Activated T-helper 2 cell treated with anti-CD3 and anti-CD28 coated beads, Interferon-gamma antibody, Interleukin-2, Interleukin-4, amounts not matched to agents 10 μg/mL and 5 μg/mL and 100 μg/mL, durations not matched to agents 14 hours and 24 hours and 36 hours (primary cell): ENCODE measurements at regions of chr7 and their contacts with region 1.

Region 1: GRCh38 chr7:24921362-24921679 is 58.7 kb downstream of the OSBPL3 start:
- DNase-seq: no peak
- H3K4me3 Mint-ChIP-seq: peak overlapping the region; percentile 41
- H3K27ac Mint-ChIP-seq: peak overlapping the region; percentile 91
- H3K4me1 Mint-ChIP-seq: peaks cover 93% of the 10 kb centered on the region
- H3K27me3 Mint-ChIP-seq: no peaks in the 10 kb centered on the region

Region 2: DNA sequence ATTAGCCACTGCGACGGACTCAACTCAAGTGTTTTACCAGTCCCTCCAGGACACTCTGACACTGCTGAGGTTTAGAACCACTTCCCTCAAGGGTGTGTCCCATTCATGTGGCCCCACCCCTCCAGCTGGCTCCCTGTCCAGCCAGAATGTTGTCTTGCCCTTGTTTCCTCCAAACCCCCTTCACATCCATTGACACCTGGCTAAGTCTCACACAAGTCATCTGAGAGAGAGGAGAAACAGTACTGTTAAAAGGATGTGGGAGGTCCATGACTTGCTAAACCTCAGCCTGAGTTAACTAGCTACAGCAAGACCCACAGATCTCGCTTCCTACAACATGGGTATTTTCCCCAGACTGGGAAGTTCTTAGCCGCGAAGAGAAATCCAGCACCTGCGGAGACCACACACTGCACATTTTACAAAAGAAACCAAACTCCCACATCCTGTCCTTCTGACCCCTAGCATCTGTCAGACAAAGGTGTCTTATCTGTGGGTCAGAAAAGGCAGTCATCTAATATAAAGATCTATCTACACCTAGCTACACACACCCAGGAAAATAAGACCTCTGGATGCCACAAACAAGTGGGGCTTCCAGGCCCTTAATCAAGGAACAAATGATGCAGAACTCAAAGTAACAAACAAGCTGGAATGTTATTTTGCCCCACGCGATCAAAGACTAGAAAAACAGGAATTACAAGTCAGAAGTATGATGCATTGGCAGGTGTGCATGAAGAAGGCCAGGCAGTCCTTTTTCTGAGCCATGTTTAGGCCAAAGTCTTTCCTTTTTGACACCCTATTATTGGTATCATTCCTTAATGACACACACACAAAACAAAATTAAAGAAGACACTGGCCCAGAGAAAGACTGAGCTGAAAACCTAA is 44.7 kb after region 1 on chr7:
- intact Hi-C with region 1: loop called (anchors 1 kb)
- DNase-seq: peak; percentile 60
- H3K4me3 Mint-ChIP-seq: peak overlapping the region; percentile 31
- H3K27ac Mint-ChIP-seq: peak overlapping the region; percentile 80
- H3K4me1 Mint-ChIP-seq: peaks cover 79% of the 10 kb centered on the region
- H3K27me3 Mint-ChIP-seq: no peaks in the 10 kb centered on the region